ENCODE measurements at regions of chr15 and their contacts with region 1.

Region 1: GRCh38 chr15:40274350-40275274 is 8.3 kb downstream of the ANKRD63 start:
- DNase-seq: peak; percentile 40 to 78
- ATAC-seq: peak; percentile 31 to 63; a peak in 5 of 6 replicates
- H3K4me3 ChIP-seq: no peak overlapping the region
- H3K27ac ChIP-seq: no peak overlapping the region
- H3K4me1 ChIP-seq: no peaks in the 10 kb centered on the region
- CTCF ChIP-seq: peak; percentile 100
- EP300 ChIP-seq: no peak
- POLR2A ChIP-seq: no peak
- RAD21 ChIP-seq: peak; percentile 88 to 89

Region 2: DNA sequence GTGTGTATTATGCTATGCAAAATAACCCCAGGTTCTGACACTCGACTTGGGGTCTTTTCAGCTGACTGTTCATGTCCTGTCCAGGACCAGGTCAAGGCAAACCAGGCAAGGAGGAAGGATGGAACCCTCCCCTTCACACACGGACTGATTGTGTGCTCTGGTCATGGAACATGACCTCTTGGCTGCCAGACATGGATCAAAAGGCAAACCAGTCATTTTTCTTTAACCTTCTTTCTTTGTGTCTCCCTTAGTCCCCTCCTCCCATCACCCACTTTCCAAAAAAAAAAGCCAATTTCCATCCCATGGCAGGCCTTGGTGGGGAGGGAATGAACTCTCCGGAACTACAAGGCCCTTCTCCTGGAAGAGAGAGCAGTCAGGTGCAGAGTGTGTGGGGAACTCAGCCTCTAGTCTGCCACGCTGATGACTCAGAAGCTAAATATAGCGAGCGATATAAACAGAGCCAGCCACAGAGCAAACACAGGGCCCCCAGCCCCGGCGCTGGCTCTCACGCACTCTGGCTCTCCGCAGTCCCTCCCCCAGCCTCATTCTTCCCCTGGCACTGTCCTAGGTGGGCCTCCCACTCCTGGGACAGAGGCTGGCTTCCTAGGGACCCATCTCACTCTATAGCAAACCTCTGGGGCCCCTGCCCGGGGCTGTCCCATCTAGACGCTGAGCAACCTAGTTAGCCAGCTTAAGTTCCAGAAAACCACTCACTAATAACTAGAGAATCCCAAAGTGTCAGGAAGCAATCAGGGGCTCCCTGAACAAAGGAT is 175.9 kb before region 1 on chr15:
- CTCF ChIA-PET with region 1: interaction called, 12 read pairs
- POLR2A ChIA-PET with region 1: no interaction called
- DNase-seq: peak; percentile 83 to 90
- ATAC-seq: peak; percentile 97
- H3K4me3 ChIP-seq: no peak overlapping the region
- H3K27ac ChIP-seq: peak overlapping the region; percentile 68 to 81
- H3K4me1 ChIP-seq: peaks cover 52% of the 10 kb centered on the region
- CTCF ChIP-seq: no peak
- EP300 ChIP-seq: peak; percentile 37 to 43; a peak in 2 of 5 replicates
- POLR2A ChIP-seq: no peak
- RAD21 ChIP-seq: no peak; a peak in 2 of 5 replicates

Region 3: DNA sequence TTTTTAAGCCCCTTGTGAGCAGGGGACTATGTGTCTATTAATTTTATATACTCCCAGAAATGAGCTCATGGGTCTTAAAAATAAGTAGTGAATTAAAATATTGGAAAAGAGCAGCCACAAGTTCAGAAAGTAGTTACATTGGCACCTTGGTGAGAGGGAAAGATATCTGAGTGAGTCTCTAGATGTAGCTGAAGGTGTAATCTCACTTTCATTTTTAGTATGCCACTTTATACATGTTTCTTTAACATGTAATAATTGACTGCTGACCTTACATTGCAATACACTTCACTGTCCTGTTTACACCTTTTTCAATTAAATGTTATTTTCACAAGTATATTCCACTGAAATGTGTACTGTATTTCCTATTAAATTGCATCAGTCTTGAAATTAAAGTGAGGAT is 47.9 kb before region 1 on chr15:
- CTCF ChIA-PET with region 1: interaction called, 658 read pairs
- POLR2A ChIA-PET with region 1: no interaction called
- DNase-seq: no peak
- ATAC-seq: no peak
- H3K4me3 ChIP-seq: no peak overlapping the region
- H3K27ac ChIP-seq: no peak overlapping the region
- H3K4me1 ChIP-seq: no peaks in the 10 kb centered on the region
- CTCF ChIP-seq: no peak
- EP300 ChIP-seq: no peak
- POLR2A ChIP-seq: no peak
- RAD21 ChIP-seq: no peak

Region 4: DNA sequence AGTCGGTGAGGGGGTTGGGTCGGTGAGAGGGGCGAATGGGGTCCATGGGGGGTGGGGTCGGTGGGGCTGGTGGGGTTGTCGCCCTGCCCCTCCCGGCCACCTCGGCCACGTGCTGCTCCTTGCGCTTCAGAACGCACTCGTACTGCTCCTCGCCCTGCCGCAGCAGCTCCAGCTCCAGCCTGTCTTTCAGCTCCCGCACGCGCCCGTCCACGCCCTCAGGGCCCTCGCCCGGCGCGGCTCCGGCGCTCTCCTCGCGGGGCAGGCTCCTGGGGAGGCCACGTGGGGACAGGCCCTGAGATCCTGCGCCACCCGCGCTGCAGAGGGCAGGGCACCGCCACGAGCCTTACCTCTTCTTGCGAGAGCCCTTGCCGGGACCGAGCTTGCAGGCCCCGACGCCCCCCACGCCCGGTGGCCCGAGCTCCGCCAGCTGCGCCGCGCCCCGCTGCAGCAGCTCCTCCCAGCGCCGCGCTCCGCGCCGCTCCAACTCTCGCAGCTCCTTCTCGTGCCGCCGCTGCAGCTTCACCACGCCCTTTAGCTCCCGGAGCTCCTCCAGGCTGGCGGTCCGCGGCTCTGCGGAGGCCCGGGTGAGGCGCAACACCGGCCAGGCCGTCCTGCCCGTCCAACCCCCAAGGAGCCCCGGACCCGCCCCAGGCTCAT is 16.4 kb after region 1 on chr15:
- CTCF ChIA-PET with region 1: interaction called, 48 read pairs
- POLR2A ChIA-PET with region 1: no interaction called
- DNase-seq: peak; percentile 31 to 38
- ATAC-seq: peak; percentile 67 to 82
- H3K4me3 ChIP-seq: peak overlapping the region; percentile 34
- H3K27ac ChIP-seq: peak overlapping the region; percentile 61 to 87; a peak in 5 of 6 replicates
- H3K4me1 ChIP-seq: peaks cover 11% of the 10 kb centered on the region; the same call in 2 of the 3 replicates
- CTCF ChIP-seq: no peak
- EP300 ChIP-seq: no peak
- POLR2A ChIP-seq: no peak
- RAD21 ChIP-seq: no peak

Region 5: DNA sequence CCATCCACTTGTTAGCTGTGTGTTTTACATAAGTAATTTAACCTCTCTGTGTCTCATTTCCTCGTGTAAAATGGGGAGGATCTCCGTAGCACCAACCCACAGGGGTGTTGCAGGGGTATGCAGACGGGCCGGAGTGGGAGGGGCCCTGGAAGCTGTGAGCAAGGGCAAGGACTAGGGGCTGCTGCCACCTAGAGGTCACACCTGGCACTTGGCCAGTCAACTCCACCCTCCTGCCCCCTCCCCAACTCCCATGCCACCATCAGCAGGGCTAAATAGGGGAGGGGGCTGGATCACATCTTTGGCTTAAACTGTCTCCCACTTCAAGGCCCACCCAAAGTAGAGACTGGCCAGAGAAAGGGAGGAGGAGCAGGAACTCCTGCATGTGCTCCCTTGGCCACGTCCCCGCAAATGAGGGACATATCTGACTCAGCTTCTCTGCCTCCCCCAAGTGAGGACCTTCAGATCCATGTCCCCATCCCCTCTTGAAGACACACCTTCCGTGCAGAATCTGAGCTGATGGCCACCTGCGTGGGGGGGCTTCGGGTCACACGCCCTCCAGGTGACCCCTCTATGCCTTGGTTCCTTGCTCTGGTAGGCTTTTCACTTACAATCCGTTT is 63.5 kb after region 1 on chr15:
- CTCF ChIA-PET with region 1: interaction called, 59 read pairs
- POLR2A ChIA-PET with region 1: no interaction called
- DNase-seq: peak; percentile 66 to 72
- ATAC-seq: peak; percentile 41 to 69; a peak in 4 of 6 replicates
- H3K4me3 ChIP-seq: 0 out of 3 replicates have a peak overlapping the region, but pooled peaks have one; percentile 47
- H3K27ac ChIP-seq: peak overlapping the region; percentile 94 to 96
- H3K4me1 ChIP-seq: peaks cover 39% of the 10 kb centered on the region
- CTCF ChIP-seq: peak; percentile 68
- EP300 ChIP-seq: no peak
- POLR2A ChIP-seq: no peak
- RAD21 ChIP-seq: peak; percentile 53 to 59